ENCODE measurements at regions of chr11 and their contacts with region 1.

Region 1: DNA sequence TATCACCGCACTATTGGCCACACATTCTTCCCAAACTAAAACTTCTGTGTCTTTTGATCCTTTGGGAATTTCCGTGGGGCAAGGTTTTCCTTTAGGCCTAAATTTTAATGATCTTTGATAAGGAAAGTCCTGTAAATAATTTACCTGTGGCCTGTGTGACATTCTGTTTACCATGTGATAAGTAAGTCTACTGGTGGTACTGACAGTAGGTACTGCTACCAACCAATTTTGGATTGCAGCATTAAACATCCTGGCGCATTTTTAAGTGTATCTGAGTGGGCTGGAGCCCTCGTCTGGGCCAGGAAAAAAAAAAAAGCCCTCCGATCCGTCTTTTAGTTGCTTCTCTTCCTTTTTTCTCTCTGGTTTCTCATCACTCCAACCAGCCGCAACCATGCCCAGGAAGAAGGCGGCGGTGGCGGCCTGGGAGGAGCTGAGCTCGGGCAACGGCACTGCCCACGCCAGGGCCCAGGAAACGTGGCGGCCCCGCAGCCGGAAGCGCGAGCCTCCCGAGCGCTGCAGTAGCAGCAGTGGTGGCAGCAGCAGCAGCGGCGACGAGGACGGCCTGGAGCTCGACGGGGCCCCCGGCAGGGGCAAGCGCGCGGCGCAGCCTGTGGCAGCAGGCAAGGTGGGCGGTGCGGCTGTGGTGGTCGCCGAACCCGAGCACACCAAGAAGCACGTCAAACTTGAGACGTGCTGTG is 33.6 kb downstream of the ASRGL1 start:
- DNase-seq: peak in 2 of 5 donors; percentile 45 to 57
- ATAC-seq: peak in 1 of 4 donors; percentile 22
- H3K4me3 ChIP-seq: peak overlapping the region in 1 of 12 donors; percentile 43
- H3K27ac ChIP-seq: peak overlapping the region in 1 of 12 donors; percentile 70
- H3K4me1 ChIP-seq: no peaks in the 10 kb centered on the region
- H3K27me3 ChIP-seq: no peaks in the 10 kb centered on the region
- CTCF ChIP-seq: no peak
- POLR2A ChIP-seq: no peak

Region 2: DNA sequence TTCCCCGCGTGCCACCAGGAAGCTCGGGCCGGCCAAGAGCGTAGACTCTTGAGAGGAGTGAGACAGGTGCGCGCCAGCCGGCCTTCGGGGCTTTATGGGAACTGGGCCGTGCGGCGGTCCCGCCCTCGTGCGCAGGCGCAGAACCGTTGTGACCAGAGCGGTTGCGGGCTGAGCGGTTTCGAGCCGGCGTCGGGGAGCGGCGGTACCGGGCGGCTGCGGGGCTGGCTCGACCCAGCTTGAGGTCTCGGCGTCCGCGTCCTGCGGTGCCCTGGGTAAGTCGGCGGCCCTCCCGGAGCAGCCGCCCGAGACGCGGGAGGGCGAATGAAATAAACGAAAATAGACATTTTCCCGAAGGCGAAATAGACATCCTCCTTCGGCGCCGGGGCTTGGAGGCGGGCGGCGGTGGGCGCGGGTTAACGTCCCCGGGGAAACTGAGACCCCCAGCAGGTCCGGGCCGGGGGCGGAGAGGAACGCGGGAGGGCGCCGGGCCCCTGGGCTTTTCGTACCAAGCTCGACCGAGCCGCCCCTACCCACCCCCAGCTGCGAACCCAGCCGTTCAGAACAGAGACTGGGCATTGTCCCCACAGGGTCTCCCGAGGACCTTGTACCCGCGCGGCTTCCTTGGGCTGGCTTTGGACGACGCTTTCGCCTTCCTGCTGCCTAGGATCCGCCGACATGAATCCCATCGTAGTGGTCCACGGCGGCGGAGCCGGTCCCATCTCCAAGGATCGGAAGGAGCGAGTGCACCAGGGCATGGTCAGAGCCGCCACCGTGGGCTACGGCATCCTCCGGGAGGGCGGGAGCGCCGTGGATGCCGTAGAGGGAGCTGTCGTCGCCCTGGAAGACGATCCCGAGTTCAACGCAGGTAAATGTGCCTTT is 33.4 kb before region 1 on chr11 and contains the start of gene ASRGL1:
- intact Hi-C with region 1: loop called in 7 of 10 experiments (anchors 2 to 5 kb)
- DNase-seq: peak; percentile 82 to 94 (median 87)
- ATAC-seq: peak; percentile 74 to 96 (median 92)
- H3K4me3 ChIP-seq: peak within 1 kb of the TSS; percentile 40 to 87 (median 66)
- H3K27ac ChIP-seq: peak within 1 kb of the TSS in 9 of 12 donors; percentile 2 to 69 (median 45)
- H3K4me1 ChIP-seq: peaks cover 0 to 52% (median 8%) of the 10 kb centered on the region in 12 donors
- H3K27me3 ChIP-seq: peaks cover 0 to 19% (median 0%) of the 10 kb centered on the region in 9 donors
- CTCF ChIP-seq: no peak
- POLR2A ChIP-seq: peak in 1 of 2 donors; percentile 33
- total RNA-seq, gene ASRGL1: 1.4 to 13.2 (median 3.2) TPM

Region 3: DNA sequence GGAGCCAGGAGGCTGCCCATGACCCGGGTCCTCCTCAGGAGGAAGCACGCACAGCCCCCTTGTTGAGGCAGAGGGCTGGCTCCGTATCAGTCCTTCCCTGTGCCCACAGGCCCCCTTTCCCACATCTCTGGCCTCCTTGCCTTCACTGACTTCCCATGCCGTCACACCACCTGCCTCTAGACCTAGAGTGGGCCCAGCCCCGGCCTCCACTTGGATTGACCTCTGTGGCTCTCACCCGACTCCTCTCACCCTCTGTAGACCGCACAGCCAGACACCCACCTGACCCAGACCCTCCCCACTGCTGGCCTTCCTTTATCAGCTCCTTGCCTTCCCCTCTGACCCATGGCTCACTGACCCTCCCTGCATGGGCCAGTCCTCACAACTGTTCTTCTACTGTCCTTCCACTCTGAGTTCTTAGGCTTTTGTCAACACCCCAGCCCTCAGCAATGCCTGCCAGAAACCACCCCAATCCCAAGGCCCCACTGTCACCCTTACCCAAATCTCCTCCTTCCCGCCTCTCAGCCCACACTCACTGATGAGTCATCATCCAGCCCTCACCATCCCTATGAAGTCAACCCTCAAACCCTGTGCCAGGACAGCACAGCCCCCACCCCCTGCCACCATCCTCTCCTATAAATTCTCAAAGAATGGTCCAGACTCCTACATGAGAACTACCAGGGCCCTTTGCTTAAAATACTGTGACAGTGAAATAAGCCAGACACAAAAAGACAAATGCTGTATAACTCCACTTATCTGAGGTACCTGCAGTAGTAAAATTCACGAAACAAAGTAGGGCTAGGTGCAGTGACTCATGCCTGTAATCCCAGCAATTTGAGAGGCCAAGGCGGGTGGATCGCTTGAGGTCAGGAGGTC is 101.4 kb after region 1 on chr11:
- intact Hi-C with region 1: no loop called
- DNase-seq: no peak
- ATAC-seq: peak; percentile 5 to 64 (median 31)
- H3K4me3 ChIP-seq: no peak overlapping the region
- H3K27ac ChIP-seq: peak overlapping the region in 1 of 12 donors; percentile 82
- H3K4me1 ChIP-seq: peaks cover 0 to 4% (median 0%) of the 10 kb centered on the region in 12 donors
- H3K27me3 ChIP-seq: no peaks in the 10 kb centered on the region
- CTCF ChIP-seq: no peak
- POLR2A ChIP-seq: no peak